CD8-positive, alpha-beta memory T cell (primary cell): ENCODE measurements at regions of chr19 and their contacts with region 1.

Region 1: GRCh38 chr19:16324384-16325160 is at the start of gene KLF2:
- DNase-seq: peak; percentile 93 to 98 (median 95)
- H3K4me3 ChIP-seq: peak within 1 kb of the TSS; percentile 100
- H3K4me3 Mint-ChIP-seq: peak within 1 kb of the TSS; percentile 78 to 100 (median 81)
- H3K27ac ChIP-seq: peak within 1 kb of the TSS; percentile 100
- H3K27ac Mint-ChIP-seq: peak within 1 kb of the TSS; percentile 91 to 99 (median 97)
- H3K4me1 ChIP-seq: peaks cover 37% of the 10 kb centered on the region
- H3K4me1 Mint-ChIP-seq: peaks cover 29 to 55% (median 38%) of the 10 kb centered on the region in 3 donors
- H3K27me3 ChIP-seq: no peaks in the 10 kb centered on the region
- H3K27me3 Mint-ChIP-seq: peaks cover 0 to 37% of the 10 kb centered on the region in 2 donors
- total RNA-seq, gene KLF2: 33.7 to 37.5 TPM

Region 2: GRCh38 chr19:16259385-16260159 is 65.0 kb before region 1 on chr19:
- CTCF ChIA-PET with region 1: no interaction called
- POLR2A ChIA-PET with region 1: interaction called, 14 read pairs
- DNase-seq: no peak
- H3K4me3 ChIP-seq: no peak overlapping the region
- H3K4me3 Mint-ChIP-seq: peak overlapping the region in 3 of 7 donors; percentile 12 to 46 (median 20)
- H3K27ac ChIP-seq: no peak overlapping the region
- H3K27ac Mint-ChIP-seq: peak overlapping the region in 3 of 8 donors; percentile 8 to 54 (median 27)
- H3K4me1 ChIP-seq: peaks cover 64% of the 10 kb centered on the region
- H3K4me1 Mint-ChIP-seq: peaks cover 44 to 63% (median 55%) of the 10 kb centered on the region in 3 donors
- H3K27me3 ChIP-seq: no peaks in the 10 kb centered on the region
- H3K27me3 Mint-ChIP-seq: peaks cover 0 to 2% of the 10 kb centered on the region in 2 donors

Region 3: DNA sequence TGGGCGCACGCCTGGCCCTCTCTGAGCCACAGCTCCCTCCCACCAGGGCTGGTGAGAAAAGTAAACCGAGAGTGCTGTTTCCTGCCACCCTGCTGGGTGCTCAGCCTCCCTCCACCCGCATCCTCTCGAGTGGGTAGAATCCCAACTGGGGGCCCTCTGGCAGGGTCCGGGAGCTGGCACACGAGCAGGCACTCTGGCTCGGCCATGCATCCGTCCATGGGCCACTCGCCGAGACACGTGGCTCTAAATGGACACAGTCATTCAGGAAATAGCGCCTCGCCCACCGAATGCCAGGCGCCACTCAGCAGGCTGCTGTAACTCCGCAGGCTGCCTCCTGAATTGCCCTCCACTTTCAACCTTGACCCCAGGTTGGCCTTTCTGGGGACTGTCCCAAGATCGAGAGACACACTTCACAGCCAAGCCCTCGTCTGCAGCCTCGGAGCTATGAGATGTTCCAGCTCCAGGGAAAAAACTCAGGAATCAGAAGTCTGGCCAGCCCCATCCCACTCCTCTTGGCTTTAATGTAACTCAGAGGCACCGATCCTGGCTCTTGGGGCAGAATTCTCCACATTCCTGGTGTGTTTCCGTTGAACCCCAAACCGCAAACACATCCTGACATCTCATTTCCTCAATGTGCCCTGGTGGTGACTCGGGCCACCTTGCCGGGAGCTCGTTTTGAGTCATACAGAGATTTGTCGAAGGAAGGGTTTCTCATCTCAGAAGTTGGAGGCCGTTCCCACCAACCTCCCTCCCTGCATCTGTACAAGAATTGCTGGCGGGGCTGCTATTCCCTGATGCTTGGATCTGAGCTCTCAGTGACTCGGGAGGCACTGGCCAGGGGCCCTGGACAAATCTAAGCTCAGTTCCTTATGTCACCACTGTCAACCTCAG is 14.1 kb after region 1 on chr19:
- CTCF ChIA-PET with region 1: interaction called, 11 read pairs
- POLR2A ChIA-PET with region 1: interaction called, 137 read pairs
- DNase-seq: peak; percentile 36 to 67 (median 48)
- H3K4me3 ChIP-seq: peak overlapping the region; percentile 59
- H3K4me3 Mint-ChIP-seq: peak overlapping the region; percentile 76 to 94 (median 88)
- H3K27ac ChIP-seq: peak overlapping the region; percentile 50
- H3K27ac Mint-ChIP-seq: peak overlapping the region; percentile 82 to 99 (median 96)
- H3K4me1 ChIP-seq: peaks cover 73% of the 10 kb centered on the region
- H3K4me1 Mint-ChIP-seq: peaks cover 63 to 70% (median 69%) of the 10 kb centered on the region in 3 donors
- H3K27me3 ChIP-seq: no peaks in the 10 kb centered on the region
- H3K27me3 Mint-ChIP-seq: no peaks in the 10 kb centered on the region

Region 4: DNA sequence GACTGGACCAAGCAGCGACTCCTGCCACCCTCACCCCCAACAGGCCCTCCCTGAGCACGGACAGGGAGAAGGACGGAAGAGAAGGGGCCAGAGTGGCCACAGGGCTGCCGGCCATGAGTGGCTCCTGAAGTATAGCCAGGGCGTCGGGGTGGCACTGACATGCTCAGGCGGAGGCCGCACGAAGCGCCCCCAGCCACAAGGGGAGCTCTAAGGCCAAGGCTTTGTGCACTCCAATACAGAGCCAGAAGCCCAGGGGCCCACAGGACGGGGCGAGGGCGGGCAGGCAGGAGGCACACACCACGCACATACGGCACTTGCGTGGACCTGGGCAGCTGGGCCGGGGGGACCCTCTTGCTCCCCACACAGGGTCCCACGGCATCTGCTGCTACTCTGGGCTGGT is 52.1 kb after region 1 on chr19:
- CTCF ChIA-PET with region 1: interaction called, 403 read pairs
- POLR2A ChIA-PET with region 1: interaction called, 1,176 read pairs
- DNase-seq: peak in 1 of 5 donors; percentile 48
- H3K4me3 ChIP-seq: no peak overlapping the region
- H3K4me3 Mint-ChIP-seq: peak overlapping the region in 2 of 7 donors; percentile 67
- H3K27ac ChIP-seq: no peak overlapping the region
- H3K27ac Mint-ChIP-seq: peak overlapping the region in 6 of 8 donors; percentile 33 to 95 (median 73)
- H3K4me1 ChIP-seq: peaks cover 93% of the 10 kb centered on the region
- H3K4me1 Mint-ChIP-seq: peaks cover 46 to 62% (median 48%) of the 10 kb centered on the region in 3 donors
- H3K27me3 ChIP-seq: no peaks in the 10 kb centered on the region
- H3K27me3 Mint-ChIP-seq: no peaks in the 10 kb centered on the region